Dorsolateral prefrontal cortex (tissue), 120 donors: ENCODE measurements at regions of chr1 and their contacts with region 1.

Region 1: GRCh38 chr1:167715157-167715999 is 6.4 kb upstream of the MPZL1 start:
- DNase-seq: peak; percentile 72 to 92 (median 82)
- H3K4me3 ChIP-seq: peak overlapping the region; percentile 64 to 94 (median 84)
- H3K27ac ChIP-seq: peak overlapping the region in 58 of 59 donors; percentile 8 to 91 (median 78)
- H3K27me3 ChIP-seq: no peaks in the 10 kb centered on the region
- CTCF ChIP-seq: peak; percentile 55 to 97 (median 88)

Region 2: GRCh38 chr1:167763525-167764220 is 48.3 kb after region 1 on chr1:
- intact Hi-C with region 1: loop called (anchors 2 kb)
- DNase-seq: peak in 6 of 10 donors; percentile 15 to 73 (median 48)
- H3K4me3 ChIP-seq: peak overlapping the region in 9 of 59 donors; percentile 1 to 35 (median 9)
- H3K27ac ChIP-seq: peak overlapping the region in 16 of 59 donors; percentile 0 to 63 (median 18)
- H3K27me3 ChIP-seq: peaks cover 0 to under 1% (median 0%) of the 10 kb centered on the region in 45 donors
- CTCF ChIP-seq: peak in 7 of 56 donors; percentile 7 to 29 (median 21)

Region 3: DNA sequence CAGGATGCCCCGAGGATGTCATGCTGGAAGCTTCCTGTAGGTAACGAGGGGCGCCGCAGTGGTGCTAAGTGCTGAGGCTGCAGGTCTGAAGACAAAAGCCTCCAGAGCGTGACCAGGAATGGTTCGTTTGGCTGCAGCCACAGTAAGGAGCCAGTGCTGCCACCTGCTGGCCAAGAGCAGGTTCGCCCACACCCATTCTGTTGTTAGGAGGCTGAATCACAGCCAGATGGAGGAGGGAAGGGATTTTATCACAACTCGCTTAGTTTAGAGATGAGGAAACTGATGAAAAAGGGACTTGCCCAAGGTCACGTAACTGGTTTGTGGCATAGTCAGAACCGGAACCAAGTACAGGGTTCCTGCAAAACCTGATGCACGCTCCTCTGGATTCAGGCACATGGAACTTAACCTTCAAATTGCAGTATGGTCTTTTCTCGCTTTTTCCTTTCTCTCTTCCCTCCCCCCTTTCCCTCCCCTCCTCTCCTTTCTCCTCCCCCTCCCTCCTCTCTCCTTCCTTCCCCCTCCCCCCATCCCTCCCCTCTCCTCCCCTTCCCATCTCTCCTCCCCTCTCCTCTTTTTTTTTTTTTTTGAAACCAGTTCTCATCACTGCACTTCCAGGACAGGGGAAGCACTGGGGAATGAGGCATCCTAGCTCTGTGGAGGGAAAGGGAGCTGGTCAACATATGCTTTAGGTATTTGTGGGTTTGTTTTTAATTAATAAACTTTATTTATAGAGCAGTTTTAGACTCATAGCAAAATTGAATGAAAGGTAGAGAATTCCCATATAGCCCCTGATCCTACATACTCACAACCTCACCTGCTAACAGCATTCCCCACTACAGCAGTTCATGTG is 88.2 kb after region 1 on chr1:
- intact Hi-C with region 1: loop called (anchors 2 kb)
- DNase-seq: peak; percentile 77 to 92 (median 88)
- H3K4me3 ChIP-seq: peak overlapping the region in 16 of 59 donors; percentile 0 to 26 (median 14)
- H3K27ac ChIP-seq: peak overlapping the region in 3 of 59 donors; percentile 8 to 40 (median 30)
- H3K27me3 ChIP-seq: peaks cover 0 to 3% (median 0%) of the 10 kb centered on the region in 45 donors
- CTCF ChIP-seq: peak; percentile 89 to 99 (median 95)

Region 4: GRCh38 chr1:167837326-167837725 is 121.9 kb after region 1 on chr1:
- intact Hi-C with region 1: no loop called
- DNase-seq: no peak
- H3K4me3 ChIP-seq: no peak overlapping the region
- H3K27ac ChIP-seq: no peak overlapping the region
- H3K27me3 ChIP-seq: peaks cover 0 to 6% (median 0%) of the 10 kb centered on the region in 45 donors
- CTCF ChIP-seq: no peak